IMR-90 (cell line): ENCODE measurements at regions of chr1 and their contacts with region 1.

Region 1: GRCh38 chr1:169546087-169546995 is 39.9 kb downstream of the F5 start:
- DNase-seq: peak; percentile 79
- ATAC-seq: peak; percentile 96
- H3K4me3 ChIP-seq: no peak overlapping the region
- H3K27ac ChIP-seq: no peak overlapping the region
- H3K4me1 ChIP-seq: no peaks in the 10 kb centered on the region
- H3K27me3 ChIP-seq: peaks cover 12% of the 10 kb centered on the region; the same call in 1 of the 2 replicates
- CTCF ChIP-seq: peak; percentile 82
- POLR2A ChIP-seq: no peak
- RAD21 ChIP-seq: peak; percentile 79

Region 2: DNA sequence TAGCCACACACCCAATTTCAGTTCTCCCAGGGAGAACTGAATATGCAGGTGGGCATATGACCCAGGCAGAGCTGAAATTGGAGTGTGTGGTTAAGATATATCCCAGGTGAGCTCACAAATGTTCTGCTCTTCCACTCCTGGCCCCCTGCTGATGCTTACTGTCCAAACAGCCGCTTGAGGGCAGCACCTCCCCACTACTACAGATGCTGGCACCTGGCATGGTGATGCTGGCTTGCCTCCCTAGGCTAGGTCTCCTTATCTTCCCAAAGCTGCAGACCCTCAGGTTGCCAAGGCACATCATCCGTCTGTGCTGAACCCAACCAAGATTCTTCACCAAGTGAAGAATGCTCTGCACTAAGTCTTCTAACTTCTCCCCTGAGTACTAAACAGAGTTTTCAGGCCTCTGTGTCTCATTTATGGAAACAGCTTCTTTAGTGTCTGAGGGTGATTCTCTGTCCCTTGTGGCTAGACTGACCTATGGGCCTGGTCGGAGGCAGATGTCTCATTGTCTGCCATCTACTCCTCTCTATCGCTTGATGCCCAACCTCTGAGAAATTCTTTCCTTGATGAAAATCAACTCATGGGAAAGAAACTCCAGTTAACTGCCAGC is 942.7 kb before region 1 on chr1:
- CTCF ChIA-PET with region 1: interaction called, 5 read pairs
- POLR2A ChIA-PET with region 1: no interaction called
- dilution Hi-C with region 1: no loop called
- in situ Hi-C with region 1: loop called (anchors 10 kb)
- intact Hi-C with region 1: loop called (anchors 1 kb)
- DNase-seq: peak; percentile 45
- ATAC-seq: peak; percentile 93
- H3K4me3 ChIP-seq: no peak overlapping the region
- H3K27ac ChIP-seq: no peak overlapping the region
- H3K4me1 ChIP-seq: no peaks in the 10 kb centered on the region
- H3K27me3 ChIP-seq: no peaks in the 10 kb centered on the region
- CTCF ChIP-seq: peak; percentile 72
- POLR2A ChIP-seq: no peak
- RAD21 ChIP-seq: peak; percentile 88

Region 3: GRCh38 chr1:169201084-169201619 is 345.2 kb before region 1 on chr1:
- CTCF ChIA-PET with region 1: no interaction called
- POLR2A ChIA-PET with region 1: no interaction called
- dilution Hi-C with region 1: no loop called
- in situ Hi-C with region 1: no loop called
- intact Hi-C with region 1: no loop called
- DNase-seq: peak; percentile 69
- ATAC-seq: peak; percentile 91
- H3K4me3 ChIP-seq: no peak overlapping the region
- H3K27ac ChIP-seq: 0 out of 2 replicates have a peak overlapping the region, but pooled peaks have one; percentile 37
- H3K4me1 ChIP-seq: peaks cover 2% of the 10 kb centered on the region; the same call in 1 of the 2 replicates
- H3K27me3 ChIP-seq: no peaks in the 10 kb centered on the region
- CTCF ChIP-seq: no peak
- POLR2A ChIP-seq: no peak
- RAD21 ChIP-seq: no peak

Region 4: DNA sequence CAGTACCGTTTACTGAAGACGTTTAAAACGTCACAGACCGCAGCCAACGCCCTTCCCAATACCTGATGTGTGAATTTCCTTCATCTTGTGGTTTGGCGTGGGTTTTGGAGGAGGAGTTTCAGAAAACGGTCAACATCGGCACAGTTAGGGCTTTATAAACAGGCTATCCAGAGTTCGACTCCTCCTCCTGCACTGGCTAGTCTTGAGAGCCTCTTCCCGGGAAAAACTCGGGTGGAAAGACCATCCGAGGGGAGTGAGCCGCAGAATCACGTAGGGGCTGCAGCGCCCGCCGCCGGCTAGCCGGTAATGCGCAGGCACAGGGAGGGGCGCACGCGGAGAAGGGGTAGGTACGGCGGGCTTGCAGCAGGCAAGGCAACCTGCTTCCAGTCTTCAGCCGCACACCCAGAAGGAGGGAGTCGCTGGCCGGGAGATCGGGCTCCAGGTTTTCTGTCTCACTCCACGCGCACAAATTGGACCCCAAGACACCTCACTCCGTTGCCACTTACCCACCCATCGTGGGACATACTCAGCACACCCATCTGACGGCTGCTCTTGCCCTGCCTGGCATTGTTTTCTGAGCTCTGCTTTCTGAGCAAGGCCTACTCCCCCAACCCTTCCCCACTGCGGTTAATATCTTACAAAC is 86.0 kb before region 1 on chr1:
- CTCF ChIA-PET with region 1: interaction called, 7 read pairs
- POLR2A ChIA-PET with region 1: no interaction called
- dilution Hi-C with region 1: no loop called
- in situ Hi-C with region 1: loop called (anchors 5 kb)
- intact Hi-C with region 1: no loop called
- DNase-seq: peak; percentile 28
- ATAC-seq: peak; percentile 37
- H3K4me3 ChIP-seq: peak overlapping the region; percentile 33
- H3K27ac ChIP-seq: no peak overlapping the region
- H3K4me1 ChIP-seq: no peaks in the 10 kb centered on the region
- H3K27me3 ChIP-seq: no peaks in the 10 kb centered on the region
- CTCF ChIP-seq: no peak
- POLR2A ChIP-seq: no peak
- RAD21 ChIP-seq: no peak

Region 5: DNA sequence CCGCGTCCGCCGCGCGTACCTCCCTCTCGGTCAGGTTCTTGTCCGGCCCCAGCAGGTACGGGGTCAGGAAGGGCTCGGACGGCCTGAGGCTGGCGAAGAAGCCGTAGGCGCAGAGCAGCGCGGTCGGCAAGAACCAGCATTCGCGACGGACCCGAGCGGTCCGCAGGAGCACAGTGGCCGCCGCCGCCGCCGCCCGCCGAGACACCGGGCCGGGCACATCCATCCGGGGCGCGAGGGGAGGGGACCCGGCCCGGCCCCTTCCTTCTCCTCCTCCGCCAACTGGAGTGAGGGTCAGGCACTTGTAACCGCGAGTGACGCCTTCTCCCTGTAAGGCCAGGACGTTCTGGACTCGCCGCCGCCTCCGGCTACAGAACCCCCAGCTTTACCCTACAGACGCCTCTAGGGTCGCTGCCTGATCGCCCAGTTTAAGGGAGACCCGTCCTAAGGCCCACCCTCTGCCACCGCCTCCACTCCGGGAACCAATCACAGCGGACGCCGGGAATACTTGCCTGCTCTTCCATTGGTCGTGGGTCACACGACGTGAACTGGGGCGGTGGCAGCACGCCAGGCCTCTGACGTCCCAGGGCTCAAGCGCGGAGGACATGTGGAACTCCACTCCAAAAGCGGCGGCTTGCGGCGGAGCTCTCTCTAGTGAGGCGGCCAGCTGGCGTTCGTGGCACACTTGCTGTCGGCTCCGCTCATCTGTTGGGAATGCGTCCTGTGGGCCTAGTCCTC is 60.6 kb before region 1 on chr1 and contains the start of gene SLC19A2:
- CTCF ChIA-PET with region 1: no interaction called
- POLR2A ChIA-PET with region 1: no interaction called
- dilution Hi-C with region 1: no loop called
- in situ Hi-C with region 1: no loop called
- intact Hi-C with region 1: loop called (anchors 1 kb)
- DNase-seq: peak; percentile 99
- ATAC-seq: peak; percentile 98
- H3K4me3 ChIP-seq: peak within 1 kb of the TSS; percentile 75
- H3K27ac ChIP-seq: peak within 1 kb of the TSS; percentile 79
- H3K4me1 ChIP-seq: peaks cover 5% of the 10 kb centered on the region
- H3K27me3 ChIP-seq: no peaks in the 10 kb centered on the region
- CTCF ChIP-seq: peak; percentile 40
- POLR2A ChIP-seq: peak; percentile 99
- RAD21 ChIP-seq: no peak; the same call in 1 of the 2 replicates
- total RNA-seq, gene SLC19A2: 5.2 and 6.9 TPM in 2 replicates

Region 6: GRCh38 chr1:169521226-169521625 is 25.1 kb before region 1 on chr1:
- CTCF ChIA-PET with region 1: no interaction called
- POLR2A ChIA-PET with region 1: no interaction called
- dilution Hi-C with region 1: no loop called
- in situ Hi-C with region 1: no loop called
- intact Hi-C with region 1: no loop called
- DNase-seq: no peak
- ATAC-seq: no peak
- H3K4me3 ChIP-seq: no peak overlapping the region
- H3K27ac ChIP-seq: no peak overlapping the region
- H3K4me1 ChIP-seq: no peaks in the 10 kb centered on the region
- H3K27me3 ChIP-seq: no peaks in the 10 kb centered on the region
- CTCF ChIP-seq: no peak
- POLR2A ChIP-seq: no peak
- RAD21 ChIP-seq: no peak

Region 7: GRCh38 chr1:169604781-169605560 is 58.6 kb after region 1 on chr1:
- CTCF ChIA-PET with region 1: no interaction called
- POLR2A ChIA-PET with region 1: no interaction called
- dilution Hi-C with region 1: no loop called
- in situ Hi-C with region 1: no loop called
- intact Hi-C with region 1: no loop called
- DNase-seq: no peak
- ATAC-seq: no peak
- H3K4me3 ChIP-seq: no peak overlapping the region
- H3K27ac ChIP-seq: no peak overlapping the region
- H3K4me1 ChIP-seq: no peaks in the 10 kb centered on the region
- H3K27me3 ChIP-seq: no peaks in the 10 kb centered on the region
- CTCF ChIP-seq: no peak
- POLR2A ChIP-seq: no peak
- RAD21 ChIP-seq: no peak

Region 8: GRCh38 chr1:169809370-169810095 is 263.2 kb after region 1 on chr1:
- CTCF ChIA-PET with region 1: no interaction called
- POLR2A ChIA-PET with region 1: no interaction called
- dilution Hi-C with region 1: no loop called
- in situ Hi-C with region 1: no loop called
- intact Hi-C with region 1: loop called (anchors 1 kb)
- DNase-seq: peak; percentile 35
- ATAC-seq: peak; percentile 86
- H3K4me3 ChIP-seq: no peak overlapping the region
- H3K27ac ChIP-seq: no peak overlapping the region
- H3K4me1 ChIP-seq: no peaks in the 10 kb centered on the region
- H3K27me3 ChIP-seq: no peaks in the 10 kb centered on the region
- CTCF ChIP-seq: peak; percentile 55
- POLR2A ChIP-seq: no peak
- RAD21 ChIP-seq: peak; percentile 50

Region 9: GRCh38 chr1:170623171-170623570 is 1076.8 kb after region 1 on chr1:
- CTCF ChIA-PET with region 1: no interaction called
- POLR2A ChIA-PET with region 1: no interaction called
- dilution Hi-C with region 1: no loop called
- in situ Hi-C with region 1: no loop called
- intact Hi-C with region 1: no loop called
- DNase-seq: peak; percentile 95
- ATAC-seq: peak; percentile 80
- H3K4me3 ChIP-seq: no peak overlapping the region
- H3K27ac ChIP-seq: no peak overlapping the region
- H3K4me1 ChIP-seq: no peaks in the 10 kb centered on the region; the same call in 1 of the 2 replicates
- H3K27me3 ChIP-seq: no peaks in the 10 kb centered on the region
- CTCF ChIP-seq: no peak
- POLR2A ChIP-seq: no peak
- RAD21 ChIP-seq: no peak